Heart right ventricle (tissue), 16 donors: ENCODE measurements at regions of chr11 and their contacts with region 1.

Region 1: DNA sequence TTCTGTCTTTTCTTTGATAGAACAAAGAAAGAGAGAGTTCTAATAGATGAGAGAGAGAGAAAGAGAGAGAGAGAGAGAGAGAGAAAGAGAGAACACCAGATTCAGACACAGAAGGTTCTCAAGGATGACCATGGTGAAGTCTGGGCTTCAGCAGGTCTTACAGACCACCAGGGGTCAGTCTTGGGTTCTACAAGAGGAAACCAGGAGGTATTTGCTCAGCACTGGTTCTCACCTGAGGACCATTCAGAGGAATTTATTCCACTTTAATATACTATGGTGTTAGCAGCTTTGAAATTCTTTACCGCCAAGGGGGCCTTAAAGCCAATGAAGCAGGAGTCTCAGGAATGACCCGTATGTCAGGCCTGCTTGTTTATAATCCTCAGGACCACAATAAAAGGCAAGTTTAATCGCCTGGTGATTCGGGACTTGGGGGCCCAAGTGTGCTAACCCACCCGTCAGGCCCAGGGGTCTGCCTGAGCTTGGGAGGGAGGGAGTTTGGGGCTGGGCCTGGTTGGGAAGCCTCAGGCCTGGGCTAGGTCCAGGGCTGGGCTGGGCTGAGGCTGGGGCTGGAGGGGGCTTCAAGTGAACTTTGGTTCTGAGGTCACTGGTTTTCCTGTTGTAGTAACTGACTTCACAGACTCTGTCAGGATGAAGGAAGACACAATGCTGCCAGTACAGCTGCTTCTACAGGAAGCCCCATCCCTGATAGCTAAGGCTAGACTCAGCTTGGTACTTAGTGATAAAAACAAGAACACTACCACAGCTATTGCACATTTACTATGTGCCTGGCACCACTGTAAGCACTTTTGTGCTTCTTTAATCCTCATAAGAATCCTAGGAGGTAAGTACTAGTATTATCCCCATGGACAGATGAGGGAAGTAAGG is 179.2 kb upstream of the ZBED5 start:
- DNase-seq: peak in 1 of 2 donors; percentile 57
- ATAC-seq: peak in 7 of 8 donors; percentile 74 to 88 (median 85)
- H3K4me3 ChIP-seq: no peak overlapping the region
- H3K27ac ChIP-seq: no peak overlapping the region
- H3K4me1 ChIP-seq: peaks cover 0 to 8% (median 0%) of the 10 kb centered on the region in 9 donors
- H3K27me3 ChIP-seq: no peaks in the 10 kb centered on the region
- CTCF ChIP-seq: peak; percentile 66 to 87 (median 82)

Region 2: DNA sequence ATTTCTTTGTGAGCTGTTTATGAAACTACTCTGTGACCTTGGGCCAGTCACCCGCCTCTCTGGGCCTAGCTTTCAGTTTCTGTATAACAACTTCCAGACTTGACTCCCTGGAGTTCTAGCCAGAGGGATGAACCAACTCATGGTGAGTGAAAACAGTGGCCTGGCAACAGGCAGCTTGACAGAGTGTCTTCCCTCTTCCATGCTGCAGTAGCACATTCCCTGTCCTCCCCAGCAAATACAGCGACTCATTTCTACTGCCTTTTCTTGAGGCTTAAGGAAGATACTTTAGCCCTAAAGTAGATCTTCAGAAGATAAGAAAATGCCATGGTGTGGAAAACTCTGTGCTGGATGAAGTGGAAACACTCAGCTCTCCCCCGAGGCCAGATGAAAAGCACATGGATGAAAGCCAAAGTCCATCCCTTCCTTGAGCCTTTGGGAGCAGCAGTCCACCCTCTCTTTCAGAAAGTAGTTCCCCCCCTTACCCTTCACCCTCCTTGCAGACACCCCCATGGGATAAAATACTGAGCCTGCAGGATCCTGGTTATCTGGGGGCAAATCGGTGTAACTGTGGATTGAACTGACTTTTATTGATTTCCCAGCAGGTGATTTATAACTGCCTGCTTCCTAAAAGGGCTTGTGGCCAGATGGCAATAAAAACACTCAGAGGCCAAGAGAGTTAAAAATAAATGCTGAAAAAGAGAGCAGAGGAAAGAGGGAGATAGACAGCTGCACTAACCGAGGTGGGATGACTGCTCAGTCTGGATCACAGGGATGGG is 367.6 kb before region 1 on chr11:
- intact Hi-C with region 1: no loop called
- DNase-seq: no peak
- ATAC-seq: peak in 7 of 8 donors; percentile 37 to 73 (median 49)
- H3K4me3 ChIP-seq: no peak overlapping the region
- H3K27ac ChIP-seq: peak overlapping the region in 6 of 10 donors; percentile 20 to 57 (median 49)
- H3K4me1 ChIP-seq: peaks cover 0 to 72% (median 36%) of the 10 kb centered on the region in 9 donors
- H3K27me3 ChIP-seq: no peaks in the 10 kb centered on the region
- CTCF ChIP-seq: no peak

Region 3: DNA sequence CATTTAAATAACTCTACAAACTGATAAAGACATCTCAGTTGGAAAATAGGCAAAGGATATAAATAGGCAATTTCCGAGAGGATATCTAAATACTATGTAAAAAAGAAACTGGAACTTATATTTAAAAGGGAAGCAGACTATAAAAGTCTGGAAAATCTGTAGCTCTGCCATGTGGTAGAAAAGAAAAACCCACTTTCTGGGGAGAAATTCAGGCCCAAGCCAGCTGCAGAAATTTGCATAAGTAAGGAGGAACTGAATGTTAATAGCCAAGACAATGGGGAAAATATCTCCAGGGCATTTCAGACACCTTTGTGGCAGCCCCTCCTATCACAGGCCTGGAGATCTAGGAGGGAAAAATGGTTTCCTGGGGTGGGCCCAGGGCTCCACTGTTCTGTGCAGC is 81.5 kb before region 1 on chr11:
- intact Hi-C with region 1: no loop called
- DNase-seq: no peak
- ATAC-seq: no peak
- H3K4me3 ChIP-seq: no peak overlapping the region
- H3K27ac ChIP-seq: no peak overlapping the region
- H3K4me1 ChIP-seq: no peaks in the 10 kb centered on the region
- H3K27me3 ChIP-seq: peaks cover 0 to 12% (median 0%) of the 10 kb centered on the region in 7 donors
- CTCF ChIP-seq: no peak

Region 4: DNA sequence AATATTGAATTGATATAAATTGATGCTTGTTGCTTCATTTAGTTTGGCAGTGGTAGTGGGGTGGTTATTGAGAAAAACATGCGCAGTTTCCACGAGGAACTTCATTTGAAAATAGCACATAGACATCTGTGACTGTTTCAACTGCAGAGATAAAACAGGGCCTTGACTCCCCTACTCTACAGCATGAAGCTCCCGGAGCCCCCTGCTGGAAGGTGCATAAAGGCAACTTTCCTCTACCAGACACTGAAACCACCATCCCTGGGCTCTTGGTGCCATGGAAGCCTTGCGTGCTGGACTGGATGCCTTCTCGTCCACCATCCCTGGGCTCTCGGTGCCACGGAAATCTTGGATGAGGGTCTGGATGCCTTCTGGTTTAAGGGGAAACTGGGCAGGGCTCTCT is 120.1 kb after region 1 on chr11:
- intact Hi-C with region 1: loop called in 4 of 10 experiments (anchors 5 kb)
- DNase-seq: peak in 1 of 2 donors; percentile 22
- ATAC-seq: peak in 4 of 8 donors; percentile 34 to 50 (median 44)
- H3K4me3 ChIP-seq: no peak overlapping the region
- H3K27ac ChIP-seq: no peak overlapping the region
- H3K4me1 ChIP-seq: peaks cover 0 to 9% (median 0%) of the 10 kb centered on the region in 9 donors
- H3K27me3 ChIP-seq: no peaks in the 10 kb centered on the region
- CTCF ChIP-seq: peak in 7 of 9 donors; percentile 28 to 58 (median 40)